WTC11 (cell line): ENCODE measurements at regions of chr17 and their contacts with region 1.

Region 1: DNA sequence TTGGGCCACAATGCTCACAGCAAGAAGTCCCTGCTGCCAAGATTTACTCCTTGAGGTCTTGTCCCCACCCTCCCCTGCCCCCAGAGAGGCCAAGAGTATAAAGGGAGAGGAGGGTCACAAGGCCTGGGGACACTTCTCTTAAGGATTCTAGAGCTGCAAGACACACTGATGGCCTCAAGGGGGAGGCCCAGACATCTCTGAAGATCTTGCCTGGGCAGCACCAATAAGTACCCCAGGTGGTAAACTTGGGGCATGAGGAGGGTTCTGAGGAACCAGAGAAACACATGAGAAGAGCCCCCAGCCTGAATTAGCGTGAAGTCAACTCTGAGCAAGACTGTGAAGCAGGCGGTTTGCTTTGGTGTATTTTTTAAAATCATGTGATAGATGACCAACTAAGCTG is 26.8 kb upstream of the MTMR4 start:
- DNase-seq: peak; percentile 42
- ATAC-seq: peak; percentile 96
- H3K4me3 Mint-ChIP-seq: no peak overlapping the region
- H3K27ac Mint-ChIP-seq: no peak overlapping the region
- H3K4me1 Mint-ChIP-seq: peaks cover 13% of the 10 kb centered on the region
- H3K27me3 Mint-ChIP-seq: peaks cover 7% of the 10 kb centered on the region
- CTCF ChIP-seq: peak; percentile 46; the same call in 1 of the 2 replicates

Region 2: GRCh38 chr17:58253081-58253480 is 288.2 kb before region 1 on chr17:
- CTCF ChIA-PET with region 1: no interaction called
- POLR2A ChIA-PET with region 1: no interaction called
- DNase-seq: no peak
- ATAC-seq: no peak
- H3K4me3 Mint-ChIP-seq: no peak overlapping the region
- H3K27ac Mint-ChIP-seq: no peak overlapping the region
- H3K4me1 Mint-ChIP-seq: peaks cover 12% of the 10 kb centered on the region
- H3K27me3 Mint-ChIP-seq: peaks cover 78% of the 10 kb centered on the region
- CTCF ChIP-seq: no peak

Region 3: GRCh38 chr17:58492238-58493121 is 48.8 kb before region 1 on chr17:
- CTCF ChIA-PET with region 1: no interaction called
- POLR2A ChIA-PET with region 1: no interaction called
- DNase-seq: no peak
- ATAC-seq: no peak
- H3K4me3 Mint-ChIP-seq: no peak overlapping the region
- H3K27ac Mint-ChIP-seq: no peak overlapping the region
- H3K4me1 Mint-ChIP-seq: no peaks in the 10 kb centered on the region
- H3K27me3 Mint-ChIP-seq: peaks cover 8% of the 10 kb centered on the region
- CTCF ChIP-seq: no peak

Region 4: GRCh38 chr17:58556833-58557250 is 15.6 kb after region 1 on chr17:
- CTCF ChIA-PET with region 1: interaction called, 19 read pairs
- POLR2A ChIA-PET with region 1: no interaction called
- DNase-seq: no peak
- ATAC-seq: no peak
- H3K4me3 Mint-ChIP-seq: no peak overlapping the region
- H3K27ac Mint-ChIP-seq: no peak overlapping the region
- H3K4me1 Mint-ChIP-seq: no peaks in the 10 kb centered on the region
- H3K27me3 Mint-ChIP-seq: no peaks in the 10 kb centered on the region
- CTCF ChIP-seq: no peak